Prostate gland (tissue), 2 donors: ENCODE measurements at regions of chr5 and their contacts with region 1.

Region 1: DNA sequence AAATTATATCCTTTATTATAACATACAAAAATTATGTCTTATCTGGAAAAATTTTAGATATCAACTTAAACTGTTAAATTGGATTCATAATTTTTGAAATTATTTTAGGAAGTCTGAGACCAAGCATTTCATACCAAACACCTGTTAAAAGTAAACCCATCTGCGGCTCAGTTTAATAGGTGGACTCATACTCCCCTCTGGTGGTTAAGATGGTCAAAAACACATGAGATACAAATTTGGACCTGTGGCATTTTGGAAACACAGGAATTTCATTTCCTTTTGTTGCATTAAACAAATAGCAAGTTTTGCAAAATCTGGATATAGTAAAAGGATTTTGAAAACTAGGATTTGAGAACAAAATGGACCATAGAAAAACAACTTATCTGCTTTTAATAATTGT is 53.7 kb downstream of the RGMB start:
- DNase-seq: peak; percentile 22
- H3K4me3 ChIP-seq: no peak overlapping the region
- H3K27ac ChIP-seq: no peak overlapping the region
- H3K4me1 ChIP-seq: no peaks in the 10 kb centered on the region
- H3K27me3 ChIP-seq: no peaks in the 10 kb centered on the region
- CTCF ChIP-seq: peak; percentile 22 to 74 (median 58)
- POLR2A ChIP-seq: no peak

Region 2: DNA sequence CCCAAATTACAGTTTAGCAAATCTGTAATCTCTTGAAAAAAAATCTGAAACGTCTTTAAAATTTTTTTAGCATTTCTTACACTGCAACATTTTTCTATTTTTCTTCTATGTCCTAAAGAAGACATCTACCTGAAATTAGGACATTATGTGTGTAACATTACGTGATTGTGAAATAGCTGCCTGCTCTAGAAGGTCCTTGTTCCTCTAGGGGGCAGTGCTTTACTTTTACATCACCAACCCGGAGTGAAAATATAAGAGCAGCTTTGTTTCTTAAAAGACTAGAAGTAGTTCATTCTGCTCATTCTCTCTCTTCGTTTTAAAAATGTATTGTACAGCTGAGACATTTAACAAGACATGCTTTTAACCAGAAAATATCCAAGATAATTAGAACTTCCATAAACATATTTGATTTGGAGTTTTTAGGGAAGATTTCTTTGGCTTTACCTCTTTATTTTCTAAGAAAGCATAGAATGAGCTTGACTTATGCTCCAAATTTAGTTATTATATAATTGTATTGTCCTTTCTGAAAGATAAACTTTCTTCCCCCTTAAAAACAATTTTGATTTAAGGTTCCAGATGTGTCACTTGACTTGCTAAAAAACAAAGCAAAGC is 1596.0 kb before region 1 on chr5:
- intact Hi-C with region 1: loop called (anchors 5 kb)
- DNase-seq: peak; percentile 34
- H3K4me3 ChIP-seq: no peak overlapping the region
- H3K27ac ChIP-seq: no peak overlapping the region
- H3K4me1 ChIP-seq: no peaks in the 10 kb centered on the region
- H3K27me3 ChIP-seq: no peaks in the 10 kb centered on the region
- CTCF ChIP-seq: peak; percentile 26 to 73 (median 68)
- POLR2A ChIP-seq: no peak

Region 3: GRCh38 chr5:98454904-98455303 is 372.3 kb before region 1 on chr5:
- intact Hi-C with region 1: no loop called
- DNase-seq: no peak
- H3K4me3 ChIP-seq: no peak overlapping the region
- H3K27ac ChIP-seq: no peak overlapping the region
- H3K4me1 ChIP-seq: no peaks in the 10 kb centered on the region
- H3K27me3 ChIP-seq: no peaks in the 10 kb centered on the region
- CTCF ChIP-seq: no peak
- POLR2A ChIP-seq: no peak